ENCODE measurements at regions of chr17 and their contacts with region 1.

Region 1: DNA sequence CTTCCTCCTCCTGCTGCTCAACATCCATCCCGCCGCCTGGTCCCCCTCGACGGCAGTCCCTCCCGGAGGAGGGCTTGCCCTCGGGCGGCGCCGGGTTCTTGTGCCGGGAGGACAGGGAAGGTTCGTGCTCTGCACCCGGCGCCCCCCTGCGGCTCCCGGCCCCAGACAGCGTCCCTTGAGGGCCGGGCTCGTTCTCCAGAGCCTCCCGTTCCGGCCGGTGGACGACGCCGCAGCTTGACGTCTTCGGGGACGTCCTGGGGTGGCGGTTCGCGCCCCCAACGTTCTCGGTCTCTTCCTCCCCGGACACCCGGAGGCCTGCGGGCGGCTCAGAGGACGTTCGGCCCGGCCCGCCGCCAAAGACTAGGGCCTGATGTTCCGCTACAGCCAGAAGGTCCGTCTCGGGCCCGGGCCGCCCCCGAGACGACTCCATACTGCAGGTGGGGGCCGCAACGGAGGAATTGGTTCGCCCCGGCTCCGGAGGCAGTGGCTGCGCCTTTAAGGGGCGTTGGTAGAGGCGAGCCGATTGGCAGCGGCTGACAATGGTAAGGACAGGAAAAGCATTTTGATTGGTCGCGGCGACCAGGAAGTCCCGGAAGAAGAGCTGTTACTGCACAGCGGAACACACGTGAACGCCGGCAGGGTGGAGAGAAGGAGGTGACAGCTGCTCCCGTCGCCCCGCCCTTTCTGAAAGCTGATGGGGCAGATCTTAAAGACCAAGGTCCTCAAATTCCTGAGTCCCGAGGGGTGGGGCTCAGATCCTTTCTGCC is at the start of gene BORCS6:
- DNase-seq: peak; percentile 98
- H3K4me3 Mint-ChIP-seq: no peak within 1 kb of the TSS
- H3K27ac Mint-ChIP-seq: peak within 1 kb of the TSS; percentile 93
- H3K4me1 Mint-ChIP-seq: peaks cover 10% of the 10 kb centered on the region
- H3K27me3 Mint-ChIP-seq: no peaks in the 10 kb centered on the region
- total RNA-seq, gene BORCS6: 7.9 to 8.3 TPM

Region 2: DNA sequence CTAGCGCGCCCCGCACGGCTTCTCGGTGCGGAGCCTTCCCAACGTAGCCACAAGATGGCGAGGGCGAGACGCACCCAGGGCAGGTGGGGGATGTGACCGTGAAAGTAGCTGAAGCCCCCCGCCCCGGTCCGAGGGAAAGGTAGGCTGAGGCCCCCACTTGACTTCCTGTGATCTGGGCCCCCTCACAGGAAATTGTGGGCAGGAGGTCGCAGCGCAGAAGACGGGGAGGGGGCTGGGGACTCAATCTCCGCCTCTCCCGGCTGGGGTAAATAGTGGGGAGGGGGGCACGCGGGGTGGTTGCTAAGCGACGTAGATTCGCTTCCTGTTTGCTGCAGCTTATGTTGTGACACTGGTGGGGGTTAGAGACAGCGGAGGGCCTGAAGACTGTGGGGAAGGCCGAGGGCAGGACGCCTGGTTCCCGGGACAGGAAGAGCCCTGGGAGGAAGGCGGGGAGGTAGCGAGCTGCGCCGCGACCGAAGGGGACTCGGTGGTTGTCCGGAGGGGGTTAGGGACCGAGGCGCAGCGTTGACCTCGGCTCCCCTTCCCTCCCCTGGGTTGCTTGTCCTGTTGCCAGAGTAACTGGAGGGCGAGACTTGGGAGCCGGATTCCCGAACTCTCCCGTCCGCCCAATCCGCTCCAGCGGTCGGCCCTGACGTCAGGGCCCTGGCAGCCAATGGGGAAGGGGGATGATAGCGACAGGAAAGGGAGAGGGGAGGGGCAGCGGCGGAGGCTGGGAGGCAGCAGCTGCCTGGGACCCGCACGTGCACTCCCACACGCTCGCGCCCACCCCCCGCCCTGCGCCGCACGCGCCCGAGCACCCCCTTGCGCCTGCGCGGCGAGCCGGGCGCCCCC is 354.7 kb before region 1 on chr17:
- CTCF ChIA-PET with region 1: no interaction called
- POLR2A ChIA-PET with region 1: no interaction called
- intact Hi-C with region 1: loop called (anchors 10 kb)
- DNase-seq: peak; percentile 95
- H3K4me3 Mint-ChIP-seq: peak overlapping the region; percentile 90
- H3K27ac Mint-ChIP-seq: peak overlapping the region; percentile 95
- H3K4me1 Mint-ChIP-seq: peaks cover 43% of the 10 kb centered on the region
- H3K27me3 Mint-ChIP-seq: no peaks in the 10 kb centered on the region

Region 3: GRCh38 chr17:8005960-8006730 is 183.7 kb before region 1 on chr17:
- CTCF ChIA-PET with region 1: no interaction called
- POLR2A ChIA-PET with region 1: no interaction called
- intact Hi-C with region 1: no loop called
- DNase-seq: no peak
- H3K4me3 Mint-ChIP-seq: no peak overlapping the region
- H3K27ac Mint-ChIP-seq: no peak overlapping the region
- H3K4me1 Mint-ChIP-seq: peaks cover 6% of the 10 kb centered on the region
- H3K27me3 Mint-ChIP-seq: peaks cover 21% of the 10 kb centered on the region

Region 4: GRCh38 chr17:8156246-8156992 is 33.5 kb before region 1 on chr17:
- CTCF ChIA-PET with region 1: interaction called, 4 read pairs
- POLR2A ChIA-PET with region 1: interaction called, 3 read pairs
- intact Hi-C with region 1: loop called (anchors 1 kb)
- DNase-seq: peak; percentile 100
- H3K4me3 Mint-ChIP-seq: no peak overlapping the region
- H3K27ac Mint-ChIP-seq: no peak overlapping the region
- H3K4me1 Mint-ChIP-seq: peaks cover 56% of the 10 kb centered on the region
- H3K27me3 Mint-ChIP-seq: no peaks in the 10 kb centered on the region

Region 5: DNA sequence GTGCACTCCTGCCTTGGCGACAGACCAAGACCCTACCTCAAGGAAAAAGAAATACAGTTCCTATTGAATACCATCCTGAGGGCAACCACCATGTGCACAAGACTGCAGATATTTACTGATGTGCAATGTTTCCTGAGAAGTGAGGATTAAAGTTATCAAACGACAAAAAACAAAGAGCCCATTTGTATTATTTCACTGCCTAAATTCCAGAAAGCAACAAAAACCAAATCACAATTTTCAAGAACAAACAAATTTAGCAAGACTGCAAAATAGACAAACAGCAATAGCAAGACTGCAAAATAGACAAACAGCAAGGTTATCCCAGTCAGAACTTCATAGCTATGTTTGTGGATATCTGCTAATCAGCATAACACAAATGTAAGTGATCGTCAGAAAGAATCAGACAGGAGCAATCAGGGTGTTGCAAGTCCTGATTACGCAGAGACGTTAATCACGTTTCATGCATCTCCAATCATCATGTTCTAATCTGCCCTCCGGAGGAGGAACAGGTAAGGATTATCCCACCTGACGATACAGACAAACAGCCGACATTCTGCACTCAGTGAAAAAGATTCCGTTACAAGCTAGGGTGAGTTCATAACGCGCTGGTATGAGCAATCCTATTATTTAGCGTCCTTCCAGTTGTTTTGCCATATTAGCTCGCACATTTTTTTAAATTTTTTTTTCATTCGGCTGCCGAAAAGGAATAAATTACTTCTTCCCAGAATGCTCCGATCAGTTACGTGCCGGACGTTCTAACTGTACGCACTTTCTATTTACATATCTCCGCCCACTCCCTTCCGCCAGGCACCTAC is 16.6 kb before region 1 on chr17:
- CTCF ChIA-PET with region 1: interaction called, 7 read pairs
- POLR2A ChIA-PET with region 1: interaction called, 96 read pairs
- intact Hi-C with region 1: loop called (anchors 1 kb)
- DNase-seq: peak; percentile 89
- H3K4me3 Mint-ChIP-seq: peak overlapping the region; percentile 77
- H3K27ac Mint-ChIP-seq: peak overlapping the region; percentile 98
- H3K4me1 Mint-ChIP-seq: peaks cover 40% of the 10 kb centered on the region
- H3K27me3 Mint-ChIP-seq: peaks cover 4% of the 10 kb centered on the region

Region 6: GRCh38 chr17:8209909-8210760 is 20.2 kb after region 1 on chr17 and contains the start of gene AURKB:
- CTCF ChIA-PET with region 1: interaction called, 5 read pairs
- POLR2A ChIA-PET with region 1: interaction called, 17 read pairs
- intact Hi-C with region 1: loop called (anchors 1 kb)
- DNase-seq: peak; percentile 96
- H3K4me3 Mint-ChIP-seq: peak within 1 kb of the TSS; percentile 99
- H3K27ac Mint-ChIP-seq: peak within 1 kb of the TSS; percentile 97
- H3K4me1 Mint-ChIP-seq: peaks cover 23% of the 10 kb centered on the region
- H3K27me3 Mint-ChIP-seq: no peaks in the 10 kb centered on the region
- total RNA-seq, gene AURKB: 184 TPM

Region 7: DNA sequence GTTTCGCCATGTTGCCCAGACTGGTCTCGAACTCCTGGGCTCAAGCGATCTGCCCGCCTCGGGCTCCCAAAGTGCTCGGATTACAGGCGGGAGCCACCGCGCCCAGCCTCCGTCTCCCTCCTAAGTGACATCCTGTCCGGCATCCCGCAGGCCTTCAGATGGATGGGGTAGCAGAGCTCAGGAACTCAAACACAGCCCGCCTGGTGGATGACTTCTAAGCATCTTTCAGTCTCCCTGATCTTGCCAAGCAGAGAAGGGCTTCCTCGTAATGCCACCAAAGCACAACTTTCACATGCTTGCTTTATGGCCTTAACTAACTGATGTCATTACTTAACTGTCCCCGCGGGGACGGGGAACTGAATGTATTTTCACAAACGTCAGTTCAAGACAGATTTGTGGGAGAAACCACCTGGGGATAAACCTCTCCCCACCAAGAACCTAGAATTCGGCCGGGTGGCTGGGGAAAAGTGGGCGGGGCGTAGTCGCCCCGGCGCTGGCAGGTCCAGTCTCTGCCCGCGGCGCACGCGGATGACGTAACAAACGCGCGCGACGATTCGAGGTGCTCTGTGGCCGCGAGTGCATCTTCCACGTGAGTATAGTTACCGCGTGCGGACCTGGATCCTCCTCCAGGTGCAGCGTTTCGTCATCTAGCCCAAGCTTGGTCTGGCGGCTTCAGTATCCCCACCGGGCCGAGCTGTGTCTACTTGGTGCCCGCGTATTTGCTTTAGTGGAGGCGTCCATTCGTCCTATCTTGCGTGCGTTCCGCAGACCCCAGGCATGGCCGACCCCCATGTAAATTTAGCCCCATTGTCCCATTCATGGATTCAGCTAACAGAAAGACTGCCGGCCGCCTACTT is 59.1 kb after region 1 on chr17 and contains the start of gene PFAS:
- CTCF ChIA-PET with region 1: interaction called, 6 read pairs
- POLR2A ChIA-PET with region 1: interaction called, 16 read pairs
- intact Hi-C with region 1: loop called (anchors 1 kb)
- DNase-seq: peak; percentile 98
- H3K4me3 Mint-ChIP-seq: peak within 1 kb of the TSS; percentile 99
- H3K27ac Mint-ChIP-seq: peak within 1 kb of the TSS; percentile 97
- H3K4me1 Mint-ChIP-seq: peaks cover 38% of the 10 kb centered on the region
- H3K27me3 Mint-ChIP-seq: no peaks in the 10 kb centered on the region
- total RNA-seq, gene PFAS: 102 to 105 TPM

Region 8: DNA sequence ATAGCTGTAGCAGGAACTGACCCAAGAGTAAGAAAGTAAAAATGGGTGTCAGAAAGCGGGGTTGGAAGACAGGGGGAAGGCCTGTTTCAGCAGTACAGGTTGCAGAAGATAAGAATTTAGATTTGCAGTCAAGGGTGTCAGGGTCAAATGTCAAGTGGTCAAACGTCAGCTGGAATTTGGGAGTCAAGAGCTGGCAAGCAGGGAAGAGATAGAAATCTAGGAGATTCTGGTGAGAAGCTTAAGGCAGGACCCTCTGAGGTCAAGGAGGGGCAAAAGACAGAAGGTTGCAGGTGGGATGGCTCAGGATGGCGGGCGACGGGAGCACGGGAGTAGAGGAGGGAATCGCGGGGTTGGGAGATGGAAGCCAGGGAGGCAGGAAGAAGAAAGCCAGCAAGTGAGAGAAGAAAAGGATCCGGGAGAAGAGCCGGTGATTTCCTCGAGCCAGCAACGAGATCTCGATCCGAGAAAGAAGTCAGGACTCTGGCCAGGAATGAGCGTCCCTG is 105.0 kb after region 1 on chr17:
- CTCF ChIA-PET with region 1: interaction called, 4 read pairs
- POLR2A ChIA-PET with region 1: interaction called, 4 read pairs
- intact Hi-C with region 1: loop called (anchors 1 kb)
- DNase-seq: no peak
- H3K4me3 Mint-ChIP-seq: peak overlapping the region; percentile 80
- H3K27ac Mint-ChIP-seq: peak overlapping the region; percentile 77
- H3K4me1 Mint-ChIP-seq: peaks cover 33% of the 10 kb centered on the region
- H3K27me3 Mint-ChIP-seq: no peaks in the 10 kb centered on the region

Measured in activated CD4-positive, alpha-beta memory T cell treated with anti-CD3 and anti-CD28 coated beads for 36 hours (primary cell).